Kidney (tissue), 22 donors: ENCODE measurements at regions of chr19 and their contacts with region 1.

Region 1: GRCh38 chr19:41570639-41571112 is 5.3 kb upstream of the CEACAM21 start:
- DNase-seq: peak; percentile 72 to 88 (median 74)
- H3K4me3 ChIP-seq: no peak overlapping the region
- H3K27ac ChIP-seq: no peak overlapping the region
- H3K4me1 ChIP-seq: peaks cover 0 to 3% (median 0%) of the 10 kb centered on the region in 3 donors
- H3K27me3 ChIP-seq: peaks cover 14% of the 10 kb centered on the region
- CTCF ChIP-seq: peak; percentile 80

Region 2: DNA sequence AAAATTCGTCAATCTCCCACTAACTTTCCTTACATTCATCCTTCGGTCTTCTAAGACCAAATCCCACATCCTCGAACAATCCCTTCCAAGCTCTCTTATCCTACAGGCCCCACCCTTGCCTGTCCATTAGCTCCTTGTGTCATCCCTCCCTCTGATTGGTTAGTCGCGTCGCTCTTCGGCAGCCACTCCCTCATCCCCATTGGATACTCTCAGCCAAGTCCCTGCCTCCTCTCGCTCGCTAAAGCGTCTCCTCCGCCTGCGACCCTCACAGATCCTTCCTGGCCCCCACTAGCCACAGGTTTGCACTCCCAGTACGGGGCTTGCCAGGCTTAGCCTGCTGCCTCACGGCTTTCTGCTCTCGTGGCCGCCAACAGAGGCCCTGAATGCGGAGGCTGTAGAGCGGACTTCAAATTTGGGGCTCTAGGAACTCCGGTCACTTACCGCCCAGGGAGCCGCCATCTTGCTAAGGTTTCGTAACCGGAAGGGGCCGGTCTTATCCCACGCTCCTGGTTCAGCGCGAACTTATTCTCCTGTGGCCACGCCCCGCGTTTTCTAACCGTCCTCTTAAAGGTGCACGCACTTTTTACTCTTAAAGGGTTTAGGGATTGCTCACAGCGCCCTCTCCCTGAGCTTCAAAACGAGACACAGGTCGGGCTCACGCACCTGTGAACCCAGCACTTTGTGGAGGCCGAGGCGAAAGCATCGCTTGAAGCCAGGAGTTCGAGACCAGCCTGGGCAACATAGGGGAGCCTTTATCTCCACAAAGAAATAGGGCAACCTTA is 131.0 kb before region 1 on chr19 and contains the start of gene DMAC2:
- intact Hi-C with region 1: loop called (anchors 10 kb)
- DNase-seq: peak; percentile 95 to 99 (median 98)
- H3K4me3 ChIP-seq: peak within 1 kb of the TSS; percentile 69 to 97 (median 89)
- H3K27ac ChIP-seq: peak within 1 kb of the TSS; percentile 84 to 97
- H3K4me1 ChIP-seq: peaks cover 0 to 3% (median 0%) of the 10 kb centered on the region in 3 donors
- H3K27me3 ChIP-seq: no peaks in the 10 kb centered on the region
- CTCF ChIP-seq: peak; percentile 54
- total RNA-seq, gene DMAC2: 43.9 TPM

Region 3: GRCh38 chr19:41714598-41714997 is 143.9 kb after region 1 on chr19:
- intact Hi-C with region 1: no loop called
- DNase-seq: no peak
- H3K4me3 ChIP-seq: no peak overlapping the region
- H3K27ac ChIP-seq: no peak overlapping the region
- H3K4me1 ChIP-seq: no peaks in the 10 kb centered on the region
- H3K27me3 ChIP-seq: no peaks in the 10 kb centered on the region
- CTCF ChIP-seq: no peak